Right ventricle myocardium inferior (tissue), 1 donor: ENCODE measurements at regions of chr2 and their contacts with region 1.

Region 1: GRCh38 chr2:6917071-6917760 is at the start of gene RNF144A:
- DNase-seq: peak; percentile 88
- ATAC-seq: peak; percentile 86
- total RNA-seq, gene RNF144A: 16.9 TPM

Region 2: DNA sequence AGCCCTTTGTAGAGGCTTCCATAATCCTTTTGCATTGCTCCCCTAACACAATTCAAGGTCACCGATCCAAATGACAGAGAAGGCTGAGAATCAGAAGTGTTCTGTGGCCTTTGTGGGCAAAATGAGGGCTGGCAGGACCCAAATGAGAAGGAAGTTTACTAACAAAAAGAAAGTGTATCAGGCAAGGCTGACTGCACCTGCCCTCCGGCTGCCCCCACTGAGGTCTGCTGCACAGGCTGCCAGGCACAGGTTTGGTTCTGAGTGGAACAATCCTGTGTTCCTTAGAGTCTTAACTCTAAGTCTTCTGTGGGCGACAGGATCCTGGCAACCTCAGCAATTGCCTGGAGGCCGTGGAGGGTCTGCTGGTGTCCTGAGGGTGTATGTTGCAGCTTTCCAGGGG is 620.0 kb before region 1 on chr2:
- intact Hi-C with region 1: no loop called
- DNase-seq: no peak
- ATAC-seq: no peak

Region 3: DNA sequence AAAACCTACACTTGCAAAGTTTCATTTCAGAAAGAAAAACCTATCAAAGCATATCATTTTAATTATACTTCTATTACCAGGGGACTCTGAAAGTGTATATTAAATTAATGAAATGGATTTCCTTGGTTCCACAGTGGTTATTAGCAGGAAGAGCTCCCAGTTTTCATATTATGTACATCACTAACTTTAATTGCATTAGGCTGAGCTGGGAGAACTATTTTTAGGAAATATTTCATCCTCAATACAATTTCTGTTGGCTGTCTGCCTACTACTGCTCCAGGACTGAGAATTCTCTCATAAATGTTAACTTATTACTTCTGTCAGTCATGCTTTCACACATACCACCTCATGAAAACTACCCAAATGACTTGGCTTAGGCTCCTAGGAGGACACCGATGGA is 352.9 kb before region 1 on chr2:
- intact Hi-C with region 1: no loop called
- DNase-seq: no peak
- ATAC-seq: no peak

Region 4: DNA sequence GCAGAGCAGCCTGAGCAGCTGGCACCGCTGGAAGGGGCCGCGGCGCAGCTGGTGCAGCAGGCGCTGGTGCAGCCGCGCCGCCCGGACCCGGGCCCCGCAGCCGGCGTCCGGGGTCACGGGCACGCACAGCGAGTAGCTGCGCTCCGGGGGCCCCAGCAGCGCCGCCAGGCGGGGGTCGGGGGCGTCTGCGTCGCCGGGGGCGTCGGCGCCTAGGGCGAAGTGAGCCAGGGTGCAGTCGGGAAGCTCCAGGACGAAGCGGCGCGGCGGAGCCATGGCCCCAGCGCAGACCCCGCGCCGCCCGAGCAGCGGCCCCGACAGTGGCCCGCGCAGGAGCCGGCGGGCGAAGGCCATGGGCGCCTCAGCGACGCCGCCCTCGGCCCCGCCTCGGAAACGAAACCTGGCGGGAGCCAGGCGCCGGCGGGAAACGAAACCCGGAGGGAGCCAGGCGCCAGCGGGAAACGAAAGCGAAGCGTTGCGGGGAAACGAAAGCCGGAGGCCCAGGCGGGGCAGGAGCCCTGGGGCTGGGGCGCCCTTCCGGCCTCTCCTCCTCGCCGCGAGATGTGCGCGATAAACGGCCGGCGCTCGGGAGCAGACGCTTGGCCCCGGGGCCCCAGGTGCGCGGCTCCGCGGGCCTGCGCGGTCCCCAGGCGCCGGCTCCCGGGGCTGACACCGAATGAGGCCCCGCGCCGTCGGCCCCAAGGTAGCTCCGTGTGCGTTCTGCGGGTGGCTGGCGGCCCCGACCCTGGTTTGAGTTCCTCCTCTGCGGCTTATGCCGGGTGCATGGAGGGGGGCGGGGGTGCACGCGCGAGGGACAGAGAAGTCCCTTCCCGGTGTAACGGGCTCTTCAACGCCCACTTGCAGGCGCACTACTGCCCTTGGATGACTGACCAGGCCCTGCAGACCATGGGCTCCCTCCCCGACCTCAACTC is 51.6 kb before region 1 on chr2 and contains the start of gene CMPK2:
- intact Hi-C with region 1: loop called (anchors 5 kb)
- DNase-seq: peak; percentile 84
- ATAC-seq: peak; percentile 66
- total RNA-seq, gene CMPK2: 3.4 TPM

Region 5: GRCh38 chr2:6876309-6876708 is 40.9 kb before region 1 on chr2:
- intact Hi-C with region 1: no loop called
- DNase-seq: no peak
- ATAC-seq: no peak